Activated CD4-positive, alpha-beta T cell treated with anti-CD3 and anti-CD28 coated beads, Interleukin-2, amount 10 ng/mL, durations not matched to agents 7 days and 5 days (primary cell): ENCODE measurements at regions of chr15 and their contacts with region 1.

Region 1: GRCh38 chr15:80835338-80835737 is 56.2 kb downstream of the CEMIP start:
- DNase-seq: no peak
- H3K4me3 Mint-ChIP-seq: no peak overlapping the region
- H3K27ac Mint-ChIP-seq: no peak overlapping the region
- H3K4me1 Mint-ChIP-seq: no peaks in the 10 kb centered on the region
- H3K27me3 Mint-ChIP-seq: peaks cover 3% of the 10 kb centered on the region

Region 2: GRCh38 chr15:80852676-80853075 is 17.3 kb after region 1 on chr15:
- CTCF ChIA-PET with region 1: no interaction called
- POLR2A ChIA-PET with region 1: interaction called, 12 read pairs
- DNase-seq: no peak
- H3K4me3 Mint-ChIP-seq: no peak overlapping the region
- H3K27ac Mint-ChIP-seq: no peak overlapping the region
- H3K4me1 Mint-ChIP-seq: peaks cover 20% of the 10 kb centered on the region
- H3K27me3 Mint-ChIP-seq: peaks cover 12% of the 10 kb centered on the region

Region 3: GRCh38 chr15:80953936-80954778 is 118.8 kb after region 1 on chr15:
- CTCF ChIA-PET with region 1: no interaction called
- POLR2A ChIA-PET with region 1: no interaction called
- DNase-seq: no peak
- H3K4me3 Mint-ChIP-seq: no peak overlapping the region
- H3K27ac Mint-ChIP-seq: no peak overlapping the region
- H3K4me1 Mint-ChIP-seq: peaks cover 8% of the 10 kb centered on the region
- H3K27me3 Mint-ChIP-seq: no peaks in the 10 kb centered on the region